Dorsolateral prefrontal cortex (tissue), 120 donors: ENCODE measurements at regions of chr17 and their contacts with region 1.

Region 1: DNA sequence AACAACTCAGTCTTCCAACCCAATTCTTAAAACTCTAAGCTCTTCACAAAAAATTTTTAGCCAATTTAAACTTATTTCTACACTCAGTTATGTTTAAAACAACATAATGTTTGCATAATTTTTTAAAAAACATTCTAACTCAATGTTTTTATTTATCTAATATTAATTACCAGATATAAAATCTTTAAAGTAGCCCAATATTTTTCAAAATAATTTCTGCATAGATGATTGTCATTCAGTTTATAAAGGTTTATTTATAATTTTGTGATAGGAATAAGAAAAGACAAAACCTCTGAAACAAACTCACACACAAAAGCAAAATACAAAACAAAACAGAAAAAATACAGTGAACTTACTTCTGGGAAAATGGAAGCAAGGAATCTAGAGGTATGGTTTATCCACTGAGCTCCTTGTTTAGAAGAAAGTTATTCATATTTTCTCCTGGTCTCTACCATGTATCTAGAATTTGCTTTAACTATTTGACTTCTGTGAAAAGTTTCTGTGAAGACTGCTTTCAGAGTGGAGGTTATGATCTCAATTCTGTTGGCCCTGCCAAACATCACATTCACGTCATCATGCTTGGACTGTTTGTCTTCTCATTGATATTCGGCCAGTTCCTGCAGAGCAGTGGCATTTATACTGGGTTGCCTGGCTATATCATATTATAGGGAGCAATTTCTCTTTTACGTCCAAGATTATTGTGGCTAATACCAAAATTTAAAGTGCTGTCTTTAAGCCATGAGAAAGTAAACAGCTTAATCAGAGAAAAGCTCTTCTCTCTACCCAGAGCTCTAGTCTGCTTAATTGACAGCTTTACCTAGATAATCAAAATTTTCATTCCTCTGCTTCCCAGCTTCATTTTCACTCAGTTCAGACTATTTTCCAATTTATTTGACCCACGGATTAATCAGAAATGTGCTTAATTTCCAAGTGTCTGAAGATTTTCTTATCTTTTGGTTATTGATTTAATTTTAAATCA is at the start of gene ABCA8:
- DNase-seq: peak in 5 of 10 donors; percentile 43 to 73 (median 47)
- H3K4me3 ChIP-seq: peak within 1 kb of the TSS; percentile 4 to 75 (median 52)
- H3K27ac ChIP-seq: peak within 1 kb of the TSS; percentile 3 to 97 (median 84)
- H3K27me3 ChIP-seq: no peaks in the 10 kb centered on the region
- CTCF ChIP-seq: peak in 6 of 56 donors; percentile 3 to 33 (median 27)
- total RNA-seq, gene ABCA8: 12.2 to 285 (median 71.5) TPM

Region 2: DNA sequence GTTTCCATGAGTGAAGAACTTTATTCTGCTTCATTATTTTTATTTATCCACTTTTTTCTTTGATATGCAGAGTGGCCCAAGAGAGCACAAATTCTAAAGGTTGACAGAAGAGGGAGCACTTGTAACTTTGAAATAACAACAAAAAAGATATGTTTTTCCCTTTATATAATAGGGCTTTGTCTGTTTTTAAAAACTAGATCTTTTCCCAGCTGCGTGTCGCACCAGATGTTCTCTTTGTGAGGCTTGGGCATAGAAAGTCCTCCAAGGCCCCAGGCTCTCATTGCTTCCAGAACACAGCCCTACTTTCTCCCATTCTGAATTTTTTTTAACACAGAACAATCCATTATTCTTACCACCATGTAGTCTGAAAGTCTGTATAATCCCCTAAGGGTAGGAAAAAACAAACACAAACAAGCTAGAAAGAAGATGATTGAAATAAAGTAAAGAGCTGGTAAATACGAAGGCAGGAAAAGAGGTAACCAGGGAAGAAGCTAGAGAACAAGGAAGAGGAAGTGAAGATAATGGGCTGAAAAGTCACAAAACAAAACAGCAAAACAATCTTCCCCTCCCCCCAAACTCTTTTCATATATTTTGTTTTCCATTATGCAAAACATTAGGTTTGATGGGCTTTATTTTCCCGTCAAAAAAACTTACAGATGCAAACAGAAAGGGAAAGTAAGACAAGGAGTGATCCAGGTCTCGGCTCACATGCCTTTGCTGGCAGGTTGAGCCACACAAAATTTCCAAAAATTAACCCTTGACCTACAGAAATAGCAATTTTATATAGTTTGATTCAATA is 160.3 kb before region 1 on chr17:
- intact Hi-C with region 1: loop called in 1 of 2 experiments (anchors 5 kb)
- DNase-seq: peak in 9 of 10 donors; percentile 42 to 86 (median 73)
- H3K4me3 ChIP-seq: peak overlapping the region in 49 of 59 donors; percentile 0 to 54 (median 27)
- H3K27ac ChIP-seq: peak overlapping the region; percentile 70 to 100 (median 98)
- H3K27me3 ChIP-seq: peaks cover 0 to 5% (median 0%) of the 10 kb centered on the region in 45 donors
- CTCF ChIP-seq: peak; percentile 53 to 84 (median 70)

Region 3: GRCh38 chr17:68993112-68993511 is 38.0 kb after region 1 on chr17:
- intact Hi-C with region 1: no loop called
- DNase-seq: no peak
- H3K4me3 ChIP-seq: no peak overlapping the region
- H3K27ac ChIP-seq: no peak overlapping the region
- H3K27me3 ChIP-seq: no peaks in the 10 kb centered on the region
- CTCF ChIP-seq: no peak